ENCODE measurements at regions of chr9 and their contacts with region 1.

Region 1: GRCh38 chr9:98074115-98074990 is 17.8 kb downstream of the NANS start:
- DNase-seq: peak; percentile 76
- H3K4me3 Mint-ChIP-seq: peak overlapping the region; percentile 13
- H3K27ac Mint-ChIP-seq: peak overlapping the region; percentile 97
- H3K4me1 Mint-ChIP-seq: peaks cover 50% of the 10 kb centered on the region
- H3K27me3 Mint-ChIP-seq: no peaks in the 10 kb centered on the region

Region 2: GRCh38 chr9:98108531-98109031 is 34.2 kb after region 1 on chr9:
- CTCF ChIA-PET with region 1: interaction called, 10 read pairs
- DNase-seq: peak; percentile 63
- H3K4me3 Mint-ChIP-seq: peak overlapping the region; percentile 48
- H3K27ac Mint-ChIP-seq: peak overlapping the region; percentile 99
- H3K4me1 Mint-ChIP-seq: peaks cover 96% of the 10 kb centered on the region
- H3K27me3 Mint-ChIP-seq: no peaks in the 10 kb centered on the region

Region 3: GRCh38 chr9:98255578-98256296 is 181.4 kb after region 1 on chr9 and contains the start of gene TBC1D2:
- CTCF ChIA-PET with region 1: interaction called, 13 read pairs
- DNase-seq: peak; percentile 98
- H3K4me3 Mint-ChIP-seq: peak within 1 kb of the TSS; percentile 95
- H3K27ac Mint-ChIP-seq: peak within 1 kb of the TSS; percentile 99
- H3K4me1 Mint-ChIP-seq: peaks cover 36% of the 10 kb centered on the region
- H3K27me3 Mint-ChIP-seq: peaks cover 4% of the 10 kb centered on the region

Measured in activated naive CD4-positive, alpha-beta T cell treated with anti-CD3 and anti-CD28 coated beads, Interleukin-2, amount 10 ng/mL, durations not matched to agents 7 days and 5 days (primary cell).